Activated CD4-positive, alpha-beta memory T cell treated with anti-CD3 and anti-CD28 coated beads, Interleukin-2, amount 10 ng/mL, durations not matched to agents 7 days and 5 days (primary cell): ENCODE measurements at regions of chr3 and their contacts with region 1.

Region 1: DNA sequence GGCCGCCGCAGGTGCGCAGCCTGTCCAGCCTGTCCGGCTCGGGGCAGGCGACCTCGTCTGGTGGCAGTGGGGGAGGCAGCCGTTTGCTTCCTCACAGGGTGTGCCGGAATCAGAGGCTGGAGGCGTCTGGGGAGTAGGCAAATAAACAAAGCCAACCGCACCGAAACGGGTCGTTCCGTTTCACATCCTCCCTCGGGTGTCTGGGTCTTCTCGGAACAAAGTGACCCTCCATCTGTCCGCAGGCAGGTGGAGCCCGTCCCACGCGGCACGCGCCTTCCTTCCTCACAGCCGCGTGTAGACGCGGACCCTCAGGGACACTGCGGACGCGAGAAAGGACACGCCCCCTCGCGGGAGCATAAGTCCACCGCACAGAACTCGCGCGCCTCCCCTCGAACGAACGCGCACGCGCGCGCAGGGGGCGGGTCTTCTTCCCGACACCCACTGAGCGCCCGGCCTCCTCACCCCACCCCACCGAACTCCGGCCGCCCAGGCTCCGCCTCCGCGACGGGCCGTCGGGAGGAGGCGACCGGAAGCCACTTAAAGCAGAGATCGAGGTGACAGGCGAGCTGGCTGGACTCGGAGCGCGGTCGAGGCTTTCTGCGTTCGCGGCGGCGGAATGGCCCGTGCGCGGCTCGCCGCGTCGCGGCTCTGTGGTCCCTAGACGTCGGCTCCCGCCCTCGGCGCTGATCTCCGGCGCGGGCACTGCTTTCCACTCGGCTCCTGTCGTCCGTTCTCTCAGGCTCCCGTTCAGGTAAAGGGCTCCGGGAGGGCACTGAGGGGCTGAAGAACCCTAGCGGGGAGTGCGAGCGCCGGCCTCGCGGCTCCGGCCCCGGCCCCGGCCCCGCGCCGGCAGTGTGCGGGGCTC is at the start of gene TIPARP:
- DNase-seq: peak; percentile 99
- H3K4me3 Mint-ChIP-seq: peak within 1 kb of the TSS; percentile 86
- H3K27ac Mint-ChIP-seq: peak within 1 kb of the TSS; percentile 96
- H3K4me1 Mint-ChIP-seq: peaks cover 47% of the 10 kb centered on the region
- H3K27me3 Mint-ChIP-seq: no peaks in the 10 kb centered on the region
- total RNA-seq, gene TIPARP: 64.7 to 73.8 TPM

Region 2: DNA sequence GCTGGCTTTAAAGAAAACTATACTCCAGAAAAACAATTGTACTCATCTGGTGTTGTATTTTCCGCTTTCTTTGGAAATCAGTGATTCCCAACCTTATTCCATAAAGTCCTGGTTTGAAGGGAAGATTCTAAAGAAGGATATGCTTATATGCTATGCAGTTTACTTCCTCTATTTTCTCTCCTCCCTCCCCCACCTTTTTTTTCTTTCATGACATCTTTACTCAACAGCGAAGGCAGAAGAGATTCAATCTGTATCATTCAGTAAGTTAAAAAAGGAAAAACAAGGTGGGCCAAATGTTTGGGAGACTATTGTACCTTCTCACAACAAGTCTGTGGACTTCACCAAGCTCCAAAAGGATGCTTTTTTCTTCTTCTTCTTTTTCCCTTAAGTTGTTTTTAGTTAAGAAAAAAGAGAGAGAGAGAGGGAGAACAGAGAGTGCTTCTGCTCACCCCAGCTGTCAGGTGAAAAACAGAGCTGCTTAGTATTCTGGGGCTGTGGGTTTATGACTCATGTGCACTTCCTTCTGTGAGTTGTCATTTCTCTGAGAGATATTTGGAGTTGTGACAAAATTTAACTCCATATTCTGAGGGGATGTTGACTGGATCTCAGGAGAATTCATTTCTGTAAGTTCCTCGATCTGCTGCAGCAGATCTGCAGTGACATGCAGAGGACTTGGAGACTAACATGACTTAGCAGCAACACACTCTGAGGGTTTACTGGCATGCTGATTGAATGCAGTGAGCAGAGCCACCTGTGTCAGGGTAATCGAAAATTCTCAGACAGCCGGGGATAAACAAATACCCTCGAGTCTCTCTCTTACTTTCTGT is 190.1 kb before region 1 on chr3:
- CTCF ChIA-PET with region 1: interaction called, 5 read pairs
- POLR2A ChIA-PET with region 1: interaction called, 22 read pairs
- DNase-seq: peak; percentile 62
- H3K4me3 Mint-ChIP-seq: peak overlapping the region; percentile 72
- H3K27ac Mint-ChIP-seq: peak overlapping the region; percentile 88
- H3K4me1 Mint-ChIP-seq: peaks cover 42% of the 10 kb centered on the region
- H3K27me3 Mint-ChIP-seq: no peaks in the 10 kb centered on the region

Region 3: GRCh38 chr3:156547637-156548036 is 126.6 kb before region 1 on chr3:
- CTCF ChIA-PET with region 1: interaction called, 8 read pairs
- POLR2A ChIA-PET with region 1: interaction called, 12 read pairs
- DNase-seq: no peak
- H3K4me3 Mint-ChIP-seq: no peak overlapping the region
- H3K27ac Mint-ChIP-seq: no peak overlapping the region
- H3K4me1 Mint-ChIP-seq: peaks cover 54% of the 10 kb centered on the region
- H3K27me3 Mint-ChIP-seq: no peaks in the 10 kb centered on the region

Region 4: DNA sequence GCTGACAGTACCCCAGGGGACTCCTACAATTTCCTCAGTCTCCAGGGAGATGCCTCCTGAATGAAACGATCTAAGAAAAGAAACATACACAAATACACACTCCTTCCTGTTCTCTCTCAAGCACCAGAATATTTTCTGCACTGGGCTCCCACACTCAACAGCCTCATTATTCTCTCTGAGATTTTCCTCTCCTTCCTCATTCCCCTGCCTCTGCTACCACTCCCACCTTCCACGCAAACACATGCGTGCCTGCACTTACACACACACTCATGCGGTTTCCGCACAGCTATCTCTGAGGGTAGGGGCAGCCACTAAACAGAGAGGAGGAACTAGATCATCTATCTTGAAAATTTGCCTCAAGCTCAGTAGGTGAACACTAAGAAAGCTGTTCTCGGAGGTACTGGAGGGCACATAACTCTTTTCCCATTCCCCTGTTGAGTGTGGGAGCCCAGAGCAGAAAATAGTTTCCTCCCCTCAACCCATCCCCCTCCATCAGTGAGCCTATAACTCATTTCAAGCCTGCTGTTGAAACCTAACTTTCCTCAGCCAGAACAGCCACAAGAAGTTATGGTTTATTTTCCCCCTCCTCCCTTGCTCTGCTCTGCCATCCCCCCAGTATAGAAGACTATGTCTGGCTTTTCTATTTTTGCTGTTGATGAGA is 30.4 kb before region 1 on chr3:
- CTCF ChIA-PET with region 1: interaction called, 10 read pairs
- POLR2A ChIA-PET with region 1: interaction called, 22 read pairs
- DNase-seq: peak; percentile 66
- H3K4me3 Mint-ChIP-seq: peak overlapping the region; percentile 43
- H3K27ac Mint-ChIP-seq: peak overlapping the region; percentile 80
- H3K4me1 Mint-ChIP-seq: peaks cover 23% of the 10 kb centered on the region
- H3K27me3 Mint-ChIP-seq: peaks cover 8% of the 10 kb centered on the region

Region 5: GRCh38 chr3:156743859-156744258 is 69.6 kb after region 1 on chr3:
- CTCF ChIA-PET with region 1: no interaction called
- POLR2A ChIA-PET with region 1: no interaction called
- DNase-seq: no peak
- H3K4me3 Mint-ChIP-seq: no peak overlapping the region
- H3K27ac Mint-ChIP-seq: no peak overlapping the region
- H3K4me1 Mint-ChIP-seq: no peaks in the 10 kb centered on the region
- H3K27me3 Mint-ChIP-seq: no peaks in the 10 kb centered on the region

Region 6: GRCh38 chr3:156816800-156817645 is 142.7 kb after region 1 on chr3:
- CTCF ChIA-PET with region 1: interaction called, 3 read pairs
- POLR2A ChIA-PET with region 1: interaction called, 68 read pairs
- DNase-seq: peak; percentile 93
- H3K4me3 Mint-ChIP-seq: peak overlapping the region; percentile 86
- H3K27ac Mint-ChIP-seq: peak overlapping the region; percentile 96
- H3K4me1 Mint-ChIP-seq: peaks cover 71% of the 10 kb centered on the region
- H3K27me3 Mint-ChIP-seq: no peaks in the 10 kb centered on the region

Region 7: GRCh38 chr3:157130467-157131251 is 456.4 kb after region 1 on chr3:
- CTCF ChIA-PET with region 1: interaction called, 24 read pairs
- POLR2A ChIA-PET with region 1: interaction called, 162 read pairs
- DNase-seq: peak; percentile 82
- H3K4me3 Mint-ChIP-seq: peak overlapping the region; percentile 60
- H3K27ac Mint-ChIP-seq: peak overlapping the region; percentile 99
- H3K4me1 Mint-ChIP-seq: peaks cover 88% of the 10 kb centered on the region
- H3K27me3 Mint-ChIP-seq: no peaks in the 10 kb centered on the region

Region 8: DNA sequence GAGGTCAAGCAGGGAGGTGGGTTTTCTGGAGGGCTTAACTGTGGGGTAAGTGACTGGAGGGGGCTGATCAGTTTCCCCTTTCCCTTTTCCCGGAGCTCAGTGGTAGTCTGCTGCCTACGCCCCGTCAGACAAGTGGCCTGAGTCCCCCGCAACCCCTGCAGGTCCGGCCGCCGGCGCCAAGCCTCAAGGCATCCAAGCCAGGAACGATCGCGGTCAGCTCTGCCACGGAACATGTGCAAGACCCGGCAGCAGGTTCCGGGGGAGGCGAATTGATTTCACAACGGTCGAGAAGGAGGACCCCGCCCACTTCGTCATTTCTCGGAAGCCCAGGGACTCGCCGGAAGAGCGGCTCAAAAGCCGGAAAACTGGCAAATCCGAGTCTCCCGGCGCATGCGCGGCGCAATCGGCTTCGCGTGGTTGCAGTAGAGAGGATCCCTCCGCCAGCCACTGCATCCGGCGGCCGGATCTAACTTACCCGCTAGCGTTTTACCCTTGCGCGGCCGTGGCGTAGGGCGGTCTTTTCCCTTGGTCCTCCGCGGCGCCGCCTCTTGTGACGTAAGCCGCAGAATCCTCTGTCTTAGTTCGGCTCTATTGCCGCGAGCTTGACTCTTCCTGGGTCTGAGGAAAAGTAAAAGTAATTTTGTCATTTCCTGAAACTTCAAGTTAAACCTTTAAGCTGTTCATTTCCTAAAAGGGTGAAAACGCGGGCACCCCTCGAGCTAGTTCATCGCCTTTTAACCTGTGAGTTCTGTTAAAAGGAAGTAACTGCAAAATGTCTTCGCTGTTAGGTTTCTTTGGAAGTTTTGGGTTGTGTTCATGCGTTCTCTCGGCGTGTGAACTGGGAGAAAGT is 500.6 kb after region 1 on chr3:
- CTCF ChIA-PET with region 1: interaction called, 7 read pairs
- POLR2A ChIA-PET with region 1: interaction called, 50 read pairs
- DNase-seq: peak; percentile 99
- H3K4me3 Mint-ChIP-seq: peak overlapping the region; percentile 89
- H3K27ac Mint-ChIP-seq: peak overlapping the region; percentile 97
- H3K4me1 Mint-ChIP-seq: peaks cover 21% of the 10 kb centered on the region
- H3K27me3 Mint-ChIP-seq: peaks cover 4% of the 10 kb centered on the region